Activated T-helper 2 cell treated with anti-CD3 and anti-CD28 coated beads, Interferon-gamma antibody, Interleukin-2, Interleukin-4, amounts not matched to agents 10 μg/mL and 5 μg/mL and 100 μg/mL, durations not matched to agents 14 hours and 24 hours and 36 hours (primary cell): ENCODE measurements at regions of chr18 and their contacts with region 1.

Region 1: DNA sequence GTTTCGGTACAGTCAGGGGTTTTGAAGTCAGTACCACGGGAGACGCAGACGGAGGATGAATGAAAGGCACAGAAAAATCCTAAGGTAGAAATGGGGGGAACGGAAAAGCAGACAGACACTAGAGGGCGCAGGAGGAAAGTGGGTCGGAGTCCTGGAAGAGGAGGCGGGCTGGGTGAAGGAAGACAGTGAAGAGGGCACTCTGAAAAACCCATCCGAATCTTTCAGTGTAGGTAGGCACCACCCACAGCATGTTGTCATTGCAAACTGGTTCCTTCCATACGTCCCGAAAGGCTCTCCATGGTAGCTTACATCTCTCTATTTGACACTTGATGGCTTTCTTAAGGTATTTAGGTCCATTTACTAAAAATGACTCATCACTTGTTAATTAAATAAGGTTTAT is 18.5 kb upstream of the ZNF236 start:
- DNase-seq: peak; percentile 57
- H3K4me3 Mint-ChIP-seq: no peak overlapping the region
- H3K27ac Mint-ChIP-seq: no peak overlapping the region
- H3K4me1 Mint-ChIP-seq: peaks cover 6% of the 10 kb centered on the region
- H3K27me3 Mint-ChIP-seq: peaks cover 4% of the 10 kb centered on the region

Region 2: DNA sequence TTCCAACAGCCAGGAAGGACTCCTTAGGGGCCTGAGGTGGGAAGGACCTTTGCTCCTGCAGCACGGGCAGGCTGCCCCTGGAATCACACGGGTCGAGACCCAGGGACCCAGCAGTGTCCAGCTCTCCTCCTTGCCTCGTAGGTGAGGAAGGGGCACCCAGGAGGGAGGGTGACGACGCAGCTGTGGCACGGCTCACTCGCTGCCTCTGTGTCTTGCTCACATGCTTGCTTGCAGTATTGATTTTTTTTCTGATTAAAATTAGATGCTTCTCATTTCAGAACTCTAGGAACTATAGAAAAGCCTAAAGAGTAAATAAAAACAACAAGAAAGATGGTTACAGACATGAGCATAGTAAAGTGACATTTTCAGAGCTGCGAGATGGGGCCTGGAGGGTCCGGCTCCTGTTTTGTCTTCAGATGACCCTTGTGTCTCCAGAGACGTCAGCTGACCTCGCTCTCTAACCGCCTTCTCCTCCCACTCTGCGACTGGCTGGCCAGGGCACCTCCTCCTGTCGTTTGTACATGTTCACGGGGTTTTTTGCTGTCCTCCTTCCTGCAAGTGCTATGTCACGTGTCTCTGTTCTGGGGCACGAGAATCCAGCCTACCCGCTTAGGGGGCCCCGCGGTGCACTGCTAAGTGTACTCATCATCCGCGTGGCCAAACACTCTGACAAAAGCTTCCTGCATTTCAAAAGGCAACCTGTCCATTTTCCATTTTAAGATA is 47.1 kb before region 1 on chr18:
- intact Hi-C with region 1: no loop called
- DNase-seq: no peak
- H3K4me3 Mint-ChIP-seq: no peak overlapping the region
- H3K27ac Mint-ChIP-seq: no peak overlapping the region
- H3K4me1 Mint-ChIP-seq: peaks cover 5% of the 10 kb centered on the region
- H3K27me3 Mint-ChIP-seq: peaks cover 10% of the 10 kb centered on the region

Region 3: DNA sequence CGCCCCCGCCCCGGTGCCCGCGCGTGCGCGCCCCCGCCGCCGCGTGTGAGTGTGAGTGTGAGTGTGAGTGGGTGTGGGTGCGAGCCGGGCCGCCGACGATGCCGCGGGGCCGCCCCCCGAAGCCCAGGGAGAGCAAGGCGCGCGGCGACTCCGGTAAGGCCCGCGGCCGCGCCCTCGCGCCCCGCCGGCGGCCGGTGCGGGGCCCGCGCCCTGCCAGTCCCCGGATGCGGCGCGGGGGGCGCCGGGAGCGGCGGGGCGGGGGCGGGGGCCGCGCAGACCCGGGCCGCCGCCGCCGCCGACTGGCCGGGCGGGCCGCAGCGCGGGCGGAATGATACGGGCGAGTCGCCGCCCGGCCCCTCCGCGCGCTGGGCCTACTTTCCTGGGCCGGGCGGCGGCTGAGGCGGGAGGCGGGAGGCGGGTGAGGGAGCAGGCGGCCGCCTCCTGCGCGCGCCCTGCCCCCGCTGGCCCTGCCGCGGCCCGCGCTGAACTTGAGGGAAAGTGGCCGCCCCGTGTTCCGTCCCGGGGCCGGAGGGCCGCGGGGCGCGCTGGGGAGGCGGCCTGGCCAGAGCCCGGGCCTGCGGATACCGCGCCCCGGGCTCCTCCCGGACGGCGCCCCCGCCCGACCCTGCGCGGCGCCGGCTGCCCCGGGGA is 18.8 kb after region 1 on chr18 and contains the start of gene ZNF236:
- intact Hi-C with region 1: loop called (anchors 2 kb)
- DNase-seq: peak; percentile 68
- H3K4me3 Mint-ChIP-seq: peak within 1 kb of the TSS; percentile 91
- H3K27ac Mint-ChIP-seq: peak within 1 kb of the TSS; percentile 93
- H3K4me1 Mint-ChIP-seq: peaks cover 41% of the 10 kb centered on the region
- H3K27me3 Mint-ChIP-seq: no peaks in the 10 kb centered on the region
- total RNA-seq, gene ZNF236: 19.8 and 22.9 TPM in 2 replicates

Region 4: DNA sequence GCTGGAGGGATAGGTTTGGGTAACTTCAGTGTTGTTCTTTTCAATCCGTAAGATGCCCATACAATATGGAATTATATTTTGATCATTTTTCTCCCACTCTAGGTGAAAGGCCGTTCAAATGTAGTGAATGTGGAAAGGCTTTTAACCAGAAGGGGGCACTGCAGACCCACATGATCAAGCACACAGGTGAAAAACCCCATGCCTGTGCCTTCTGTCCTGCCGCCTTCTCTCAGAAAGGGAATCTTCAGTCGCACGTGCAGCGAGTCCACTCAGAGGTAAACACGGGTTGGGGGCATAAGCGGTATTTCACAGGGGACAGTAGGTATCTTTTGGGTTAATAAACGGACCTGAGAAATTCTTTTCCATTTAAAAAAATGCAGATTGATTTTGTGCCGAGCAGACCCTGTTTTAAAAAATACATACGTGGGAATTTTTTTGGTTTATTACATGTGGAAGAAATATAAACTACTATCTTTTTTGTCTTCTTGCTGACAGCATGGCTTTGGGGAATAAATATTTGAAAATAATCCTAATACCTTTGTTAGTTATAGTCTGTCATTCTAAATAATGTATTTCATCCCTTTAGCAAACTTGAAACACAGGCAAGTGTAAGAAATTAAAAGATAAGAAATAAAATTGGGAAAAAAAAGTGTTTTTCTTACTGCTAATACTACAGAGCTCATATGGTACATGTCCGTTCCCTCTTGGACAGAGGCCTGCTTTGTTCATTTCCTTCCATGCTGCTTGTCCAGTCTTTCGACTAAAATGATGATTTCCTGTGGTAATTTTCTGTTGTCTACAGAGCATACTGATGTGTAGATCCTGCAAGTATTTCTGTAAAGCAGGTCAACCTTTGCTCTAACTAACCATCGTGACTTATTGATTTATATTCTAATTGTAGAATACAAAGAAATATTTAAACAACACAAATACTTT is 71.8 kb after region 1 on chr18:
- intact Hi-C with region 1: loop called (anchors 1 kb)
- DNase-seq: peak; percentile 22
- H3K4me3 Mint-ChIP-seq: no peak overlapping the region
- H3K27ac Mint-ChIP-seq: peak overlapping the region; percentile 85
- H3K4me1 Mint-ChIP-seq: peaks cover 14% of the 10 kb centered on the region
- H3K27me3 Mint-ChIP-seq: no peaks in the 10 kb centered on the region

Region 5: DNA sequence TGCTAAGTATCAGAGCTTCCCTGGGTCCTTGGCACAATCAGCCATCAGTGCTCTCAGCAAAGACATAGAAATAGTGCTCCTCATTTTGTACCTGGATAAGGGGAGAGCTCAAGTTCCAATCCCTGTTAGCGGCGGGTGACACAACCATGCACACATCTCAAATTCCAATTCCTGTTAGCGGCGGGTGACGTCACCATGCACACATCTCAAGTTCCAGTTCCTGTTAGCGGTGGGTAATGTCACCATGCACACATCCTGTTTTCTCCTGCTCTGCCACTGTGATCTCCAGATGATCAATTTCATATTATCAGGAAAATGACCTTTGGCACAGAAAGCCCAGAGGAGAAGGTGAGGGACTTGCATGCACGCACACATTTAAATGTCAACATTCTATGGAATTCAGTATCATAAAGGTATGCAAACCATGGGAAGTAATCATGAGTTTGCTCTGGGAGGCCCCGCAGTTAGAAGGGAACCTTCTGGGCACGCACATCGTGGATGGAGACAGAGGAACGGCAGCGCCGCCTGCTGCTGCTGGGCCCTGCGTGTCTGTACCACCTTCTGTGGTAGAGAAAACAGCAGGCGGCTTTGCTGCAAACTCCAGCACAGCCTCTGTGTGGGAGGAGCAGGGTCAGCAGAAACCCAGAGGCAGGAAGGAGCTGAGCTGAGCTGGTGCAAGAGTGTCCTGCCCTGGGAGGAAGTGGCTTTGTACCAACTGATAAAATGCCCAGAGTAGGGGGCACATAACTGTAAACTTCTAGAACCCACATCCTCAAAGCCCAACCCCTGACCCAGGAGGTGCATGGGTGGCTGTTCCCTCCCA is 251.0 kb after region 1 on chr18:
- intact Hi-C with region 1: loop called (anchors 2 kb)
- DNase-seq: peak; percentile 80
- H3K4me3 Mint-ChIP-seq: peak overlapping the region; percentile 83
- H3K27ac Mint-ChIP-seq: peak overlapping the region; percentile 96
- H3K4me1 Mint-ChIP-seq: peaks cover 62% of the 10 kb centered on the region
- H3K27me3 Mint-ChIP-seq: no peaks in the 10 kb centered on the region

Region 6: DNA sequence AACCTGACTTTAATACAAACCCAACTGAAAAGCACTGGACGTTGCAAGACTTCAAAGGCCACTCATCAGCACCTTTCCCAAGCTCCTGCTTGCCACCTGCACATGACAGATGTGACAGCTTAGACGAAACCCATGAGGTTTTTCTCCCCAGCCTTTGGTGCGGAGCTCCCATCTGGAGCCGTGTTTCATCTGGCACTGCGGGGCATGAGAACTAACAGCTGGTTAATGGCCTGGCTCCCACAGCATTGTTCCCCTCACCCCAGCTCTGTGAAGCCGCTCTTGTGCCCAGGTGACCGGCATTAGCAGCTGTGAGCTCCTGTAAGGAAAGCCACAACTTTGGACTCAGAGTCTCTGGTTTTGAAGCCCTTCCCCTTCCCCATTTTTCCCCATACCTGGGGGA is 496.8 kb after region 1 on chr18:
- intact Hi-C with region 1: no loop called
- DNase-seq: no peak
- H3K4me3 Mint-ChIP-seq: no peak overlapping the region
- H3K27ac Mint-ChIP-seq: no peak overlapping the region
- H3K4me1 Mint-ChIP-seq: no peaks in the 10 kb centered on the region
- H3K27me3 Mint-ChIP-seq: peaks cover 2% of the 10 kb centered on the region